ENCODE measurements at regions of chr9 and their contacts with region 1.

Region 1: GRCh38 chr9:15277400-15278090 is 29.5 kb downstream of the TTC39B start:
- DNase-seq: peak in 5 of 9 donors; percentile 27 to 53 (median 35)
- ATAC-seq: peak; percentile 48
- H3K4me3 ChIP-seq: no peak overlapping the region
- H3K4me3 Mint-ChIP-seq: peak overlapping the region in 1 of 10 donors; percentile 13
- H3K27ac ChIP-seq: no peak overlapping the region
- H3K27ac Mint-ChIP-seq: peak overlapping the region in 5 of 9 donors; percentile 2 to 73 (median 31)
- H3K4me1 ChIP-seq: peaks cover 0 to 4% of the 10 kb centered on the region in 2 donors
- H3K4me1 Mint-ChIP-seq: peaks cover 18 to 85% (median 48%) of the 10 kb centered on the region in 7 donors
- H3K27me3 ChIP-seq: no peaks in the 10 kb centered on the region
- H3K27me3 Mint-ChIP-seq: no peaks in the 10 kb centered on the region

Region 2: GRCh38 chr9:15220658-15221318 is 56.8 kb before region 1 on chr9:
- CTCF ChIA-PET with region 1: no interaction called
- POLR2A ChIA-PET with region 1: no interaction called
- intact Hi-C with region 1: no loop called
- DNase-seq: no peak
- ATAC-seq: no peak
- H3K4me3 ChIP-seq: no peak overlapping the region
- H3K4me3 Mint-ChIP-seq: no peak overlapping the region
- H3K27ac ChIP-seq: no peak overlapping the region
- H3K27ac Mint-ChIP-seq: peak overlapping the region in 4 of 9 donors; percentile 36 to 54 (median 46)
- H3K4me1 ChIP-seq: peaks cover 0 to 4% of the 10 kb centered on the region in 2 donors
- H3K4me1 Mint-ChIP-seq: peaks cover 8 to 32% (median 25%) of the 10 kb centered on the region in 7 donors
- H3K27me3 ChIP-seq: no peaks in the 10 kb centered on the region
- H3K27me3 Mint-ChIP-seq: no peaks in the 10 kb centered on the region

Region 3: DNA sequence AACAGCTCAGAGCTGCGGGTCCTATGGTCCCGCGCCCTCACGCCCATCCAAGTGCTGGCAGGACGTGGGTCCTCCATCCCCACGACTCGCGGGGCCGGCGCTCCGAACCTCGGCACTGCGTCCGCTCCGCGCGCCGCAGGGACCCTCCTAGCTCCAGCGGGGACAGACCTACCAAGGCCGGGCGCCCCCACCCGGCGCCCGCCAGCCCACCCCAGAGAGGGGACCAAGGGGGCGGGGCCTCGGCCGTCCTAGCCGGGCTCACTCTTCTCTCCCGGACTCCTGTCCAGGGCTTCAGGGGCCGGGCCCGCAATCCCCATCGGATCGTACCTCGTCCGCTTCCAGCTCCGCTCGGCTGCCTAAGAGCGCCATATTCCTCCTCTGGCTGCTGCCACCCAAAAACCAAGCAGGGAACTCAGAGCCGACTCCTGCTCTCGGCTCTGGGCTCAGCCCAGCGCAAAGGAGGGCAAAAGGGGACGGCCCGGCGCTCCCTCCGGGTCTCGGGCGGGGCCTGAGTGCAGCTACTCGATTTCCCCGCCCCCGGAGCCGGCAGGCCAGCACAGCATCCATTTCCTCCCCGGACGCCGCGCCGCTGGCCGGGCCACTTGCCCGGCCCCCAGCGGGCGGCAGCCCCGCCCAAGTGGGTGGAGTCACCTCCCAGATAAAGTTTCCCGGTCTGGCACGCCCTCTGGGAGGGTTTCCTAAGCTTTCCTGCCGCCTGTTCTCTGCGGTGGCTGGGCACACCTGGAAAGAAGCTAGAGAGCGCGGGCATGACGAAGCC is 29.4 kb after region 1 on chr9 and contains the start of gene TTC39B:
- CTCF ChIA-PET with region 1: interaction called, 13 read pairs
- POLR2A ChIA-PET with region 1: interaction called, 6 read pairs
- intact Hi-C with region 1: loop called (anchors 1 kb)
- DNase-seq: peak; percentile 34 to 88 (median 53)
- ATAC-seq: peak; percentile 87
- H3K4me3 ChIP-seq: peak within 1 kb of the TSS; percentile 86
- H3K4me3 Mint-ChIP-seq: peak within 1 kb of the TSS; percentile 89 to 99 (median 97)
- H3K27ac ChIP-seq: peak within 1 kb of the TSS; percentile 81
- H3K27ac Mint-ChIP-seq: peak within 1 kb of the TSS; percentile 84 to 97 (median 95)
- H3K4me1 ChIP-seq: peaks cover 25 to 44% of the 10 kb centered on the region in 2 donors
- H3K4me1 Mint-ChIP-seq: peaks cover 37 to 66% (median 61%) of the 10 kb centered on the region in 7 donors
- H3K27me3 ChIP-seq: no peaks in the 10 kb centered on the region
- H3K27me3 Mint-ChIP-seq: no peaks in the 10 kb centered on the region
- total RNA-seq, gene TTC39B: 29.1 to 49.3 (median 42.8) TPM

Region 4: GRCh38 chr9:15416880-15417279 is 139.3 kb after region 1 on chr9:
- CTCF ChIA-PET with region 1: no interaction called
- POLR2A ChIA-PET with region 1: no interaction called
- intact Hi-C with region 1: loop called (anchors 1 kb)
- DNase-seq: peak in 7 of 9 donors; percentile 21 to 45 (median 39)
- ATAC-seq: no peak
- H3K4me3 ChIP-seq: no peak overlapping the region
- H3K4me3 Mint-ChIP-seq: no peak overlapping the region
- H3K27ac ChIP-seq: no peak overlapping the region
- H3K27ac Mint-ChIP-seq: no peak overlapping the region
- H3K4me1 ChIP-seq: no peaks in the 10 kb centered on the region
- H3K4me1 Mint-ChIP-seq: peaks cover 0 to 10% (median 2%) of the 10 kb centered on the region in 7 donors
- H3K27me3 ChIP-seq: no peaks in the 10 kb centered on the region
- H3K27me3 Mint-ChIP-seq: peaks cover 0 to 7% (median 0%) of the 10 kb centered on the region in 5 donors

Region 5: DNA sequence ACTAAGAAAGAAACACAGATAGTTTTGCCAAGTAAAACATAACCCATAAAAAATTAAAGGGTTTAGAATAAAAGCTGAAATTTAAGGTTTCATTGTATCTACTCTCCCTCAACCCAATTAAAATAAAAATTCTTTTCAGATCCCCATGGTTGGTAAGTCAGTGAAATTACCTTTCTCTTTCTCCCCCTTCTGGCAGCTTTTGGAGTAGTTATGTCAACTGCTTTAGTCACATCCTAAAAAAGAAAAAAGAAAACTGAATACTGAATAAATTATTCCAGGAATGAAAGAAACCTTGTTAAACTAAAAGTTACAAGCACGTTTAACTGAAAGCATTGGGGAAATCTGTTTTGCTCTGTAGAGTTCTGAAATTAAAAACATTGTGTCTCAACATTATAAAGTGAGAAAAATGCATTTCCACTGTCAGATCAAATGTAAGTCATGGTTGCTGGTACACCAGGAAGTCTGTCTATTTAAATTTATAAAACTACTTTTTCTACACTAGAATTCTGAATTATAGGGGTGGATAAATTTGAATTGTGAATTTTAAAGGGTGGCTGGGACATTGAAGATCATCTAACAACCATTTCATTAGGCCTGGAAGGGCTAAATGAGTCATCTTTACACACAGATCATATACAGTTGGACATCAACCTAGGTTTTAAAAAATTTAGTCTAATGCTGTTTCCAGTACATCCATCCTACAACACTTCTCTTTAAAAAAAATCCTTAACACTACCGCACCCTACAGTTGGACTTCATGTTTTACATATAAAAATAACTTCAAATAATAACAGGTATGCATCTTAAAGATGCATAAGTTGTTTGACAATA is 208.5 kb after region 1 on chr9:
- CTCF ChIA-PET with region 1: no interaction called
- POLR2A ChIA-PET with region 1: no interaction called
- intact Hi-C with region 1: loop called in 1 of 2 experiments (anchors 5 kb)
- DNase-seq: peak in 5 of 9 donors; percentile 27 to 41 (median 31)
- ATAC-seq: peak; percentile 45
- H3K4me3 ChIP-seq: no peak overlapping the region
- H3K4me3 Mint-ChIP-seq: no peak overlapping the region
- H3K27ac ChIP-seq: no peak overlapping the region
- H3K27ac Mint-ChIP-seq: peak overlapping the region in 8 of 9 donors; percentile 10 to 63 (median 42)
- H3K4me1 ChIP-seq: peaks cover 6 to 9% of the 10 kb centered on the region in 2 donors
- H3K4me1 Mint-ChIP-seq: peaks cover 19 to 57% (median 47%) of the 10 kb centered on the region in 7 donors
- H3K27me3 ChIP-seq: no peaks in the 10 kb centered on the region
- H3K27me3 Mint-ChIP-seq: no peaks in the 10 kb centered on the region

Region 6: DNA sequence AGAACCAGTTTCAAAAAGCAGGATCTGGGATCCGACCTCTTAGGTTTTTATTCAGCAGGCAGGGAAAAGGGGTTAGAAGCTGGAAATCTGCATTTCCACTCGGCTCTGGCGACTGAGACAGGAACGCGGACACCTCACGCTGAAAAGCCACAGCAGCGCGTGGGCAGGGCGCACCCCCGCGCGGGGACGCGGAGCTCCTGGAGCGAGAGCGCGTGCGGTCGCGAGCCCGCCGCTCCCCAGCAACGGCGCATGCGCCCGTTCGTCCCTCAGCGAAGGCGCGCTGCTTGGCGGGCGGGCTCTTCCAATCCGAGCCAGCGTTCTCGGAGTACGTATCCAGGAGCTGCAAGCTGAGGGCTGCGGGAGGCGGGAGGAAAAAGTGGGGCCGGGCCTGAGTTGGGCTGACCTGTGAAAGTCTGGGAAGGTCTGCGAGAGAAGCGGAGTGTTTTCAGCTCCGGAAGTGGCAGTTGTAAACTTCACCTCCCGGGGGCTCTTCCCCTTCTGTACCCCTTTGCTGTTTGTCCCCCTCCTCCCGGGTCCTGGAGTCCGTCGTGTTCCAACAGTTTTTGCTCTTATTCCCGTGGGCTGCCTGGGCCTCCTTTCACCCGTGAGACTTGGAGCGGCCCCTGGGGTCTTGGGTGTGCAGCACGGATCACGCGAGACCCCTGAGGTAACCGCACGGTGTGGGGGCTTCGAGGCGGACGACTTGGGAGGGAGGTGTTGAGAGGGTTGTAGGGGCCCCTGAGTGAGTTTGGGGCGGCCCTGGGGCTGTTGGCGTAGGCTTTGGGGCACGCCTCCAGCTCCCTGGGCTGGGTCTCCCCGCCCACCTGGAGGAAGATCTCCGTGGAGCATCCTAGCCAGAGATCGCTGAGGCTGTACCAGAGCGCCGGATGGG is 275.3 kb after region 1 on chr9 and contains the start of gene CCDC171:
- CTCF ChIA-PET with region 1: no interaction called
- POLR2A ChIA-PET with region 1: no interaction called
- intact Hi-C with region 1: loop called in 1 of 2 experiments (anchors 10 kb)
- DNase-seq: peak; percentile 80 to 89 (median 85)
- ATAC-seq: peak; percentile 92
- H3K4me3 ChIP-seq: peak within 1 kb of the TSS; percentile 65
- H3K4me3 Mint-ChIP-seq: peak within 1 kb of the TSS; percentile 88 to 97 (median 94)
- H3K27ac ChIP-seq: peak within 1 kb of the TSS; percentile 66
- H3K27ac Mint-ChIP-seq: peak within 1 kb of the TSS; percentile 73 to 93 (median 86)
- H3K4me1 ChIP-seq: peaks cover 0 to 11% of the 10 kb centered on the region in 2 donors
- H3K4me1 Mint-ChIP-seq: peaks cover 0 to 23% (median 12%) of the 10 kb centered on the region in 7 donors
- H3K27me3 ChIP-seq: no peaks in the 10 kb centered on the region
- H3K27me3 Mint-ChIP-seq: peaks cover 0 to 39% (median 0%) of the 10 kb centered on the region in 5 donors
- total RNA-seq, gene CCDC171: 0.77 to 3.7 (median 2.7) TPM

Region 7: DNA sequence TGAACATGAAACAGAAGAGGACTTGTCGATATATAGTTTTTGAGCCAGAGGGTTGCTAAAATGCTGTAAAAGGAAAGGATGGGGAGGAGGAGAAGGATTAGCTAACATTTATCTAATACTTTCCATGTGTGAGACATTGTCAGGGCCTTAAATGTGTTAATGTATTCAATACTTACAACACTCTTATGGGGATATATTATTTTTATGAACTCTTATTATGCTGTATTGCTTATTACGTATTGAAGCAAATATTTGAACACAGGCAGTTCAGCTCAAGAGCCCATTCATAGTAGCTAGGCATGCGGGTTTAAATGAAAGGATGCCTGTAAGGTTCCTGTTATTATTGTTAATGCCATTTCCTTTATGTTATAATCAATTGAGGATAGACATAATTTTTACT is 666.8 kb after region 1 on chr9:
- CTCF ChIA-PET with region 1: no interaction called
- POLR2A ChIA-PET with region 1: no interaction called
- intact Hi-C with region 1: no loop called
- DNase-seq: no peak
- ATAC-seq: no peak
- H3K4me3 ChIP-seq: no peak overlapping the region
- H3K4me3 Mint-ChIP-seq: no peak overlapping the region
- H3K27ac ChIP-seq: no peak overlapping the region
- H3K27ac Mint-ChIP-seq: no peak overlapping the region
- H3K4me1 ChIP-seq: no peaks in the 10 kb centered on the region
- H3K4me1 Mint-ChIP-seq: no peaks in the 10 kb centered on the region
- H3K27me3 ChIP-seq: no peaks in the 10 kb centered on the region
- H3K27me3 Mint-ChIP-seq: no peaks in the 10 kb centered on the region